ENCODE measurements at regions of chr16 and their contacts with region 1.

Region 1: GRCh38 chr16:79601931-79602627 is 1.5 kb upstream of the MAF start:
- DNase-seq: peak; percentile 92
- ATAC-seq: peak; percentile 14
- H3K4me3 Mint-ChIP-seq: peak overlapping the region; percentile 84
- H3K27ac Mint-ChIP-seq: peak overlapping the region; percentile 92
- H3K4me1 Mint-ChIP-seq: peaks cover 32% of the 10 kb centered on the region
- H3K27me3 Mint-ChIP-seq: peaks cover 24% of the 10 kb centered on the region

Region 2: GRCh38 chr16:78705694-78706093 is 896.4 kb before region 1 on chr16:
- CTCF ChIA-PET with region 1: interaction called, 6 read pairs
- POLR2A ChIA-PET with region 1: no interaction called
- intact Hi-C with region 1: loop called (anchors 1 to 2 kb)
- DNase-seq: peak; percentile 30
- ATAC-seq: peak; percentile 99
- H3K4me3 Mint-ChIP-seq: no peak overlapping the region
- H3K27ac Mint-ChIP-seq: no peak overlapping the region
- H3K4me1 Mint-ChIP-seq: peaks cover 13% of the 10 kb centered on the region
- H3K27me3 Mint-ChIP-seq: no peaks in the 10 kb centered on the region

Region 3: DNA sequence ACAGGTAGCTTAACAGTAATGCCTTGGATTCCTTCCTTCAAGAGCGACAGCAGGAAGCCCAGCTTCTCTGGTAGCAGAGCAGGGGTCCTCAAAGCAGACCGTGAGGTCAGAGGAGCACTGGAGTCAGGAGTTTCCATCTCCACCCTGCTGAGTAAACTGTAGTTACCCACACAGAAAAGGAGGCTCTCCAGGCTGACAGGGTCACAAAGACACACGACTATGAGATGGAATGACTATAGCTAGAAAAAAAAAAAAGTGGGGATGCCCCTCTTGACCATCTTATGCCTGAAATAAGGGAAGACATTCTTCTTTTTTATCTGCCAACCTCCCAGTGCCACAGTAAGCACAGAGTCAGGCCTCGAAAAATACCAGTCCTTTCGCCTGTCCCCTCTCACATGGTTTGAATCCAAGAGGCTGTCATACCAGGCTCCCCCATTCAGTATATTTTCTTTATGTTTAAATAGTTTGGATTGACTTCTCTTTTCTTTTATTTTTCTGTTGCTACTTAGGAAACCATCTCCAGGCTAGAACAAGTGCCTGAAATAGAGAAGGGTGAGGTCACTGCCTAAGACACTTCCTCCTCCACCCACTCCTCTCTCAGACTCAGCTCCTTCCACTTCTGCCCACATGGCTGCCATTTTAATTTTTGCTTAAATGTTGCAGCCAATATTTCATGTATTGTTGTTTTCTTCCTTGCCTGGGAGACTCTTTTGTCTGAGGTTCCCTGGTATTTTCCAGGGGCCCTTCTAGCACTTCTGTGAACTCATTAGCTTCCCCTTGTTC is 708.9 kb before region 1 on chr16:
- CTCF ChIA-PET with region 1: interaction called, 6 read pairs
- POLR2A ChIA-PET with region 1: interaction called, 4 read pairs
- intact Hi-C with region 1: loop called in 1 of 2 experiments (anchors 2 kb)
- DNase-seq: peak; percentile 39
- ATAC-seq: peak; percentile 65
- H3K4me3 Mint-ChIP-seq: no peak overlapping the region
- H3K27ac Mint-ChIP-seq: peak overlapping the region; percentile 80
- H3K4me1 Mint-ChIP-seq: peaks cover 61% of the 10 kb centered on the region
- H3K27me3 Mint-ChIP-seq: no peaks in the 10 kb centered on the region

Region 4: GRCh38 chr16:79071424-79071823 is 530.7 kb before region 1 on chr16:
- CTCF ChIA-PET with region 1: no interaction called
- POLR2A ChIA-PET with region 1: interaction called, 4 read pairs
- intact Hi-C with region 1: loop called (anchors 1 to 2 kb)
- DNase-seq: no peak
- ATAC-seq: no peak
- H3K4me3 Mint-ChIP-seq: no peak overlapping the region
- H3K27ac Mint-ChIP-seq: peak overlapping the region; percentile 34
- H3K4me1 Mint-ChIP-seq: peaks cover 64% of the 10 kb centered on the region
- H3K27me3 Mint-ChIP-seq: peaks cover 2% of the 10 kb centered on the region

Region 5: DNA sequence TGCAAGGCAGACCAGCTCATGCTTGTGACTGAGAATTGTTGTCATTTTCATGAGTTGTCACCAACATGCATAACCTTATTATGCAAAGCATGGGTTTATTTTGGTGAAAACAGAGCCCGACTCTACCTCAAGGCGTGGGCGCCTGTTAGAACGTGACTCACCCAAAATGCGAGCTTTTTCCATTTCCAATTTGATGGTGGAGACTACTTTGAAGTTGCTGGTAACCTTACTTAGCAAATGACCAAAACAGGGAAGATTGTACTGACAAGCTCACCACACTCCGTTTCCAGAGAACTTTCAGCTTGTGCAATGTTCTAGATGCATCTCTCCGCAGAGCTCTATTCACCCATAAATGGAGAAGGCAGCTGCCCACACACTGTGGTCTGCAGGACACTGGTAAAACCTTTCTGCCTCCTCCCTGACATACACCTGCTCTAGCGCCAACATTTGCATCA is 286.0 kb before region 1 on chr16:
- CTCF ChIA-PET with region 1: interaction called, 7 read pairs
- POLR2A ChIA-PET with region 1: interaction called, 4 read pairs
- intact Hi-C with region 1: loop called in 1 of 2 experiments (anchors 1 kb)
- DNase-seq: peak; percentile 85
- ATAC-seq: peak; percentile 89
- H3K4me3 Mint-ChIP-seq: no peak overlapping the region
- H3K27ac Mint-ChIP-seq: peak overlapping the region; percentile 88
- H3K4me1 Mint-ChIP-seq: peaks cover 28% of the 10 kb centered on the region
- H3K27me3 Mint-ChIP-seq: peaks cover 15% of the 10 kb centered on the region

Region 6: DNA sequence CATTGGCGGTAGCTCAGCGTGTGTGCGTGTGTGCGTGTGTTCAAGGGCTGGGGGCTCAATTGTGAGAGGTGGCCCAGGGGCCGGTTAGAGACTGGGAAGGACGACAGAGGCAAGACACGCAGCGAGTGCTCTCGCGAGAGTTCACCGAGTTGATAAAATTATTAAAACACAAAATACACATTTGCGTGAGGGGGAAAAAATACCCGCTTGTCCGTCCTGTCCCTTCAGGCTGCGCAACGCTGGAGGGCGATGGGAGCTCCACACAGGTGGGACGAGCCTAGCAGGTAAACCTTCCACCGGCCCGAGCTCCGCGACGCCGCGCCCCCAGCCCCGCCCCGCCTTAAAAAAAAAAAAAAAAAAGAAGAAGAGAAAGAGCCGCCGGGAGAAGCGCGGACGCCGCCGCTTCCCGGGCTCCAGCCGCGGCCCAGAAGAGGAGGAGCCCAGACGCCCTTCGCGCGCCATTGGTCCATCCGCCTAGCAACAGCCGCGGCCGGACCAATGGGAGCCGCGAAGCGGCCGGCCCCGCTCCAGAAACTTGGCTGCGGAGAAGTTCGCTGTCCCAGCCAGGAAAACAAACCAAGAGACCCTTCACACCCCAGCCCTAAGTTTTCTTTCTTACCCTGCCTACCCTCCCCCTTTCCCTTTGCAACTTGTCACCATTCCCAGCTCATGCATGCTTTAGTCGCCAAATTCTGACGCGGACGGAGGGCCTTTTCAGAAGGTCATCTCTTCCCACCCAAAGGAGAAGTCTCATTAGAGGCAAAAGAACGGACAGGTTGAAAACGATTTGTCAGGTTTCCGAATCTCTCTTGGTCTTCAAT is 168.4 kb after region 1 on chr16:
- CTCF ChIA-PET with region 1: interaction called, 5 read pairs
- POLR2A ChIA-PET with region 1: no interaction called
- intact Hi-C with region 1: loop called in 1 of 2 experiments (anchors 1 kb)
- DNase-seq: peak; percentile 88
- ATAC-seq: peak; percentile 100
- H3K4me3 Mint-ChIP-seq: peak overlapping the region; percentile 77
- H3K27ac Mint-ChIP-seq: peak overlapping the region; percentile 83
- H3K4me1 Mint-ChIP-seq: peaks cover 13% of the 10 kb centered on the region
- H3K27me3 Mint-ChIP-seq: peaks cover 3% of the 10 kb centered on the region

Region 7: DNA sequence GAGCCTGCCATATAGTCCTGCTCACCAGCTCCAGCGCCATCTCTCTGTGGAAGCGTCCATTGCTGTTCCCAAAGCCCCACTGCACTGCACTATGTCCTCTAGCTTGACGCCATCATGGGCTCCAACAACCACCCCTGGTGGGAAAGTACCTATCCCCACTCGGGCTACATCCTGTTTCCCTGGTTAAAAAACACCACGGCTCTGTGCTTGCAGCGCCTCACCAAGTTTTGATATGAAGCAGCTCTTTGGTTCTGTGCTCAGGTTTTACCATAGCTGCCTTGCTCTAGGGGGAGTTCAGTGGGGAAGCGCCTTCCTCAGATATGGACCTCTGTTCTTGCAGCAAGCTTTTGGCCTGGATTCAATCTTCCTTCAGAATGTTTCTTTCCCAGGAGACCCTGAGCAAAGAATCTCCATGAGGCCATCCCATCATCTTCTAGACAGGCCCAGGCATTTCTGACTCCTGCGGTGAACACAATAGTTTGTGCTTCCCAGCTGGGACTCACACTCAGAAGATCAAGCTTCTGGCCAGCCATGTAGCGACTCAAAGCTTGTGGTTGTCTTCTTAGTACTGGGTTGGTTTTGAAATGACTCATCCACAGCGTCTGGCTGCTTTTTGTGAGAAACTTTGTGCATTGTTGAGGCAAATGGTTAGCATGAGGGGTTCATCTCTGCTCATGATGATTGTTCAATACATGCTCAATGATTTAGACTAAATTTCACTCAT is 978.2 kb after region 1 on chr16:
- CTCF ChIA-PET with region 1: no interaction called
- POLR2A ChIA-PET with region 1: no interaction called
- intact Hi-C with region 1: loop called in 1 of 2 experiments (anchors 10 kb)
- DNase-seq: peak; percentile 86
- ATAC-seq: peak; percentile 91
- H3K4me3 Mint-ChIP-seq: peak overlapping the region; percentile 60
- H3K27ac Mint-ChIP-seq: peak overlapping the region; percentile 99
- H3K4me1 Mint-ChIP-seq: peaks cover 50% of the 10 kb centered on the region
- H3K27me3 Mint-ChIP-seq: peaks cover 2% of the 10 kb centered on the region